Sigmoid colon (tissue), 7 donors: ENCODE measurements at regions of chr2 and their contacts with region 1.

Region 1: DNA sequence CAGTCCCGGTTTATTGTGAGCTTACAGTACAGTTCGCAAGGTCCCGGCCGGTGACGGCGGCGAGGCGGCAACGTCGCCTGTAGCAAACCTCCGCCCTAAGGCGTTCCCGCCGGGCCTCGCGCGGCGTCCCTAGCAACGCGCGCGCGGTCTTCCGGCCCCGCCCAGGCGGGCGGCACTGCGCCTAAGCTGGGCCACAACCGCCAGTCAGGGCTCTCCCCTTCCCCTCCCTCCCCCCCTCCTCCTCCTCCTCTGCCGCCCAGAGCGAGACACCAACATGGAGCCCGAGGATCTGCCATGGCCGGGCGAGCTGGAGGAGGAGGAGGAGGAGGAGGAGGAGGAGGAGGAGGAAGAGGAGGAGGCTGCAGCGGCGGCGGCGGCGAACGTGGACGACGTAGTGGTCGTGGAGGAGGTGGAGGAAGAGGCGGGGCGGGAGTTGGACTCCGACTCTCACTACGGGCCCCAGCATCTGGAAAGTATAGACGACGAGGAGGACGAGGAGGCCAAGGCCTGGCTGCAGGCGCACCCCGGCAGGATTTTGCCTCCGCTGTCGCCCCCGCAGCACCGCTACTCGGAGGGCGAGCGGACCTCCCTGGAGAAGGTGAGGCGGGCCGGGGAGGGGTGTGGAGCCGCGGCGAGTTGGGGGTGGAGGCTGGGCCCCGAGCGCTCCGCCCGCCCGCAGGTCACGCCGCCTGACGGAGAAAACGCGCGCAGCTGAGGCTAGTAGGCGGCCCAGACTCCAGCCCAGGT is at the start of gene ALMS1:
- DNase-seq: peak; percentile 93
- H3K4me3 ChIP-seq: peak within 1 kb of the TSS; percentile 69 to 81 (median 73)
- H3K27ac ChIP-seq: peak within 1 kb of the TSS; percentile 90 to 95 (median 92)
- H3K4me1 ChIP-seq: peaks cover 0 to 26% (median 16%) of the 10 kb centered on the region in 4 donors
- H3K27me3 ChIP-seq: no peaks in the 10 kb centered on the region
- CTCF ChIP-seq: peak in 1 of 4 experiments; percentile 37
- EP300 ChIP-seq: no peak
- POLR2A ChIP-seq: peak in 1 of 2 donors; percentile 19
- total RNA-seq, gene ALMS1: 29.3 to 47.6 (median 34.1) TPM

Region 2: DNA sequence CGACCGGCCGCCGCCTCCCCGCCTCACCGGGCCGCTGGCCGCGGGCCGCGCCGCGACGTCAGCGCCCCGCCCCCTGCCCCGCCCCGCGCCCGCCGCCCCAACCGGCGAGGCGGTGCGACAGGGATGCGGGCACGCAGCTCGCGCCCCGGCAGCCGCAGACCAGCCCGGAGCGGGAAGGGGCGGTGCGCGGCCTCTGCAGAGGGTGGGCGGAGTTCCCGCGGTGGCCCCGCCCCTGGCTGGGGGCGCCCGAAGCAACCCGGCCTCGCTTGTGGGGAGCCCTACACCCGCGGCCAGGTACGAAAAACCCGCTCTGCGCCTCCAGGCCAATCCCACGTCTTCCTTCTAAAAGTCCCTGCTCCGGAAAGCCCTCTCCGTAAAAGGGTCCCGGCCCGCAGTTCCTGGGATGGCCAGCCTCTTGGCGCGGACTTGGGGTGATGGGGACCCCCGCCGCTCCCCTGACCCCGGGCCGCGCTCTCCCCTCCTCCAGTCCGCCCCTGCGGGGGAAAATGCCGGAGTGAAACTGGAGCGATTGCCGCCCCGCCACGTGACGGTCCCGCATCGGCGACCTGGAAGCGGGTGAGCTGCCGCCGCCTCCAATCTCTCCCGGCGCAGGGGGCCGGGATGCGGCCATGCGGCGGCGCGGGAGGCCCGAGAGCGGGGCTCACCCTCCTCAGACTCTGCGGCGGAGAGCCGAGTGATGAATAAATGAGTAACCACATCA is 272.7 kb before region 1 on chr2 and contains the start of gene RAB11FIP5:
- intact Hi-C with region 1: loop called (anchors 5 kb)
- DNase-seq: peak; percentile 90
- H3K4me3 ChIP-seq: peak within 1 kb of the TSS; percentile 60 to 92 (median 84)
- H3K27ac ChIP-seq: peak within 1 kb of the TSS; percentile 88 to 97 (median 92)
- H3K4me1 ChIP-seq: peaks cover 0 to 44% (median 33%) of the 10 kb centered on the region in 4 donors
- H3K27me3 ChIP-seq: no peaks in the 10 kb centered on the region
- CTCF ChIP-seq: peak in 1 of 4 experiments; percentile 16
- EP300 ChIP-seq: no peak
- POLR2A ChIP-seq: no peak
- total RNA-seq, gene RAB11FIP5: 13.9 to 24.4 (median 19.4) TPM

Region 3: DNA sequence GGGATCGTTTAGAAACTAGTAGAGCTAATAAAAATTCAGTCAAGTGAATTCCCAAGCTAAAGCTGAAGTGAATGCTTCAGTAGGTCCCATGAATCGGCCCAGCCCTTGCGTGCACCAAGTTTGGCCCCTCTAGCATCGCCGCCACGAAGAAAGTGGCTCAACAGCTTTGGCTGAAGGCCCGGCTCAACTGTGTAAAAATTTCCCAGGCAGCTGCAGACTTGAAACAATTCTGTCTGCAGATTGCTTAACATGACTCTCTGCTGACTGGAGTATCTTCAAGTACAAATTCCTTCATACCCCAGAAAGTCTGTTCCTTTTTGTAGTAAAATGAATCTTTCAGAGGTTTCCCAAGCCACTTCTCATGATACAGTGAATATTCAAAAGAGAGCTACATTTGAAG is 32.6 kb after region 1 on chr2:
- intact Hi-C with region 1: loop called (anchors 1 kb)
- DNase-seq: peak; percentile 88
- H3K4me3 ChIP-seq: no peak overlapping the region
- H3K27ac ChIP-seq: peak overlapping the region; percentile 1 to 62 (median 50)
- H3K4me1 ChIP-seq: peaks cover 0 to 21% (median 9%) of the 10 kb centered on the region in 4 donors
- H3K27me3 ChIP-seq: no peaks in the 10 kb centered on the region
- CTCF ChIP-seq: no peak
- EP300 ChIP-seq: no peak
- POLR2A ChIP-seq: no peak

Region 4: DNA sequence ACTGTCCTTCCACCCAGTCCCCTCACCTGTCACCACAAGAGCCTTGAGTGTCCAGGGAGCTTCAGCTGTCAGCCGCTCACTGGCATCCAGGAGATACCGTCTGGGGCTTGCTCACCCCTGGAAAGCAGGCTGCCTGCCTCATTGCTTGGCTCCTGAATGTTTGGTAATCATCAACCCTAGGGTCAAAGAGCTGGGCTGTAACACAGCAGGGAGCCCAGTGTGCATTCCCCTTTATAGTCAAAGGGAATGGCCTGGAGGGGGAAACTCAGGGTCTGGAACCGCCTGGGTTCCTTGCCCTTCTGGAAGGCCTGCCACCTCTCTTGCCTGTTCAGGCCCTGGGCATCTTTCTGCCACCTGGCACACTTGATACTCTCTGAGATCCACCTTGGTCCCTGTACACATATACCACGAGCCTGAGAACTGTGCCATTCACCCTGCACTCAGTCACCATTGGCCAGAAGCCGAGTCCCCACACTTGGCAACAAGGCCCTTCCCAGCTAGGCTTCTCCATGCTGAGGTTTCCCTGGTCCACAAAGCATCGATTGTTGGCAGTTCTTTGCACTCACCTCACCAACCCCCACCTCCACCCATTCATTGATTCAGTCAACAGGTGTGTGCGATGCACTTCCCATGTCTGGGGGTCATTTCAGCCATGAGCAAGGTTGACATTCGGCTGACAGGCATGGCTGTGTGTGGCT is 316.3 kb after region 1 on chr2:
- intact Hi-C with region 1: no loop called
- DNase-seq: no peak
- H3K4me3 ChIP-seq: no peak overlapping the region
- H3K27ac ChIP-seq: no peak overlapping the region
- H3K4me1 ChIP-seq: no peaks in the 10 kb centered on the region
- H3K27me3 ChIP-seq: no peaks in the 10 kb centered on the region
- CTCF ChIP-seq: no peak
- EP300 ChIP-seq: no peak
- POLR2A ChIP-seq: no peak

Region 5: GRCh38 chr2:73736855-73737779 is 351.3 kb after region 1 on chr2 and contains the start of gene TPRKB:
- intact Hi-C with region 1: loop called (anchors 10 kb)
- DNase-seq: peak; percentile 98
- H3K4me3 ChIP-seq: peak within 1 kb of the TSS; percentile 66 to 83 (median 71)
- H3K27ac ChIP-seq: peak within 1 kb of the TSS; percentile 74 to 80 (median 80)
- H3K4me1 ChIP-seq: peaks cover 0 to 19% (median 14%) of the 10 kb centered on the region in 4 donors
- H3K27me3 ChIP-seq: no peaks in the 10 kb centered on the region
- CTCF ChIP-seq: no peak
- EP300 ChIP-seq: peak in 1 of 4 donors; percentile 33
- POLR2A ChIP-seq: peak; percentile 35 to 39
- total RNA-seq, gene TPRKB: 19.0 to 45.9 (median 40.2) TPM